Activated CD8-positive, alpha-beta T cell treated with anti-CD3 and anti-CD28 coated beads, Interleukin-2, amount 10 ng/mL, durations not matched to agents 7 days and 5 days (primary cell): ENCODE measurements at regions of chr6 and their contacts with region 1.

Region 1: DNA sequence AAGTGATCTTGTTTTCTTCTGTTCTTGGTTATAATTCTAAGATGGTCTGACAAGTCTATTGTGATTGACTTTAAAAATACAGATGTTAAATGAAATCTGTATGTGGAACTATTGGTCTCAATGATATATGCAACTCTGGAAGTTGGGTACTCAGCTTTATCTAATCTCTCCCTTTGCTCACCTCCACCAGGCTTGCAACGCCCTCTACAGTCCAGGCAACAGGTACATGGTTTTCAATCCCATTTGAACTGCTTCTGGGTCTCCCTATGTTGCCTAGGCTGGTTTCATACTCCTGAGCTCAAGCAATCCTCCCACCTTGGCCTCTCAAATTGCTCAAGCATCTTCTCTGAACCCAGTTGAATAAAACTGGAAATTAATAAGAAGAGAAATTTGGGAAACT is 25.6 kb upstream of the HLA-DQB1 start:
- DNase-seq: peak; percentile 69
- ATAC-seq: peak; percentile 81
- H3K4me3 Mint-ChIP-seq: no peak overlapping the region
- H3K27ac Mint-ChIP-seq: no peak overlapping the region
- H3K4me1 Mint-ChIP-seq: peaks cover 15% of the 10 kb centered on the region
- H3K27me3 Mint-ChIP-seq: peaks cover 47% of the 10 kb centered on the region

Region 2: DNA sequence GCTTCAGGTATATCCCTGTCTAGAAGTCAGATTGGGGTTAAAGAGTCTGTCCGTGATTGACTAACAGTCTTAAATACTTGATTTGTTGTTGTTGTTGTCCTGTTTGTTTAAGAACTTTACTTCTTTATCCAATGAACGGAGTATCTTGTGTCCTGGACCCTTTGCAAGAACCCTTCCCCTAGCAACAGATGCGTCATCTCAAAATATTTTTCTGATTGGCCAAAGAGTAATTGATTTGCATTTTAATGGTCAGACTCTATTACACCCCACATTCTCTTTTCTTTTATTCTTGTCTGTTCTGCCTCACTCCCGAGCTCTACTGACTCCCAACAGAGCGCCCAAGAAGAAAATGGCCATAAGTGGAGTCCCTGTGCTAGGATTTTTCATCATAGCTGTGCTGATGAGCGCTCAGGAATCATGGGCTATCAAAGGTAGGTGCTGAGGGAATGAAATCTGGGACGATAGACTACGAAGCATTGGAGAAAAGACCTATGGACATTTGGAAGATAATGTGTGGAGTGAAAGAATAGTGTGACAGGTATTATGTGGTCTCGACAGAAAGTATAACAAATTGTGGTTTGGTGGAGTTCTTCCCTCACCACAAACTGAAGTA is 252.3 kb before region 1 on chr6 and contains the start of gene HLA-DRA:
- CTCF ChIA-PET with region 1: interaction called, 11 read pairs
- POLR2A ChIA-PET with region 1: no interaction called
- DNase-seq: peak; percentile 63
- ATAC-seq: peak; percentile 91
- H3K4me3 Mint-ChIP-seq: peak within 1 kb of the TSS; percentile 70
- H3K27ac Mint-ChIP-seq: peak within 1 kb of the TSS; percentile 63
- H3K4me1 Mint-ChIP-seq: peaks cover 18% of the 10 kb centered on the region
- H3K27me3 Mint-ChIP-seq: peaks cover 32% of the 10 kb centered on the region
- total RNA-seq, gene HLA-DRA: 30.9 to 31.3 TPM

Region 3: DNA sequence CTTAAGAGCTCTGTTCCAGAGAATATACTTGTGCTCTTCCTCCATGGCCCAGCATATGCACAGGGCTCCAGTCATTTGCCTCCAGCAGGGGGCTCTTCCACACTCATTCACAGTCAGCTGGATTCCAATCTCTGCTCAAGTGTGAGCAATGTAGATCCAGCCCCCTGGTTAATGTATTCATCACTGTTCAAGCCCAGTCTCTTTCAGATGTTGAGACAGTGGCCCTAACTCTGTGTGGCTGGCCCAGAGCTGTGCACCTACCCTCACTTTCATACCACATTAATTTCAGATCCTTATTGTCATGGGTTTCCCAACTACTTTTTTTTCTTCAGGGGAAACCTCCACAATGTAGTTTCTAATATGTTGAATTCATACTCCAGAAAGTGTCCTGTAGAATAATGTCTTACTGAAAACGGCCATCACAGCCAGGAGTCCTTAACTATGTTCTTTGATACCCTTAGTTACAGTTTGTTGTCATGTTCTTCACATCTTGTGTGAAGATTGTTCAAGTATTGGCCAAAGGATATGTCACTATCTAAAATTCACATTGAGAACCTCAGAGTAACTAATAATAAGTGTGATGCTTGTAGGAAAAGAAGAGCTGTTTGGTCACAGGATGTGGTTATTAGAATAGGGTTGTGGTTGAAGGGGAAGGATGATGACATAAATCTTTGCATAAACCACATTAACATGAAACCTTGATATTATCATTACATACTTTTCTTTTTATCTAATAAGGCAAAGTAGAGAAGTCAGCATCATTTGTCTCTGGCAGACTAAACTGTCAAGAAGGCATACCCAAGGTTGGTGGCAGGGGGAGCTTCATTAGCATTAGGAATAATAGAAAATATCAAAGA is 69.2 kb before region 1 on chr6:
- CTCF ChIA-PET with region 1: interaction called, 24 read pairs
- POLR2A ChIA-PET with region 1: no interaction called
- DNase-seq: peak; percentile 63
- ATAC-seq: peak; percentile 80
- H3K4me3 Mint-ChIP-seq: peak overlapping the region; percentile 64
- H3K27ac Mint-ChIP-seq: peak overlapping the region; percentile 98
- H3K4me1 Mint-ChIP-seq: peaks cover 50% of the 10 kb centered on the region
- H3K27me3 Mint-ChIP-seq: no peaks in the 10 kb centered on the region

Region 4: GRCh38 chr6:32679492-32679891 is 12.5 kb before region 1 on chr6:
- CTCF ChIA-PET with region 1: no interaction called
- POLR2A ChIA-PET with region 1: no interaction called
- DNase-seq: no peak
- ATAC-seq: no peak
- H3K4me3 Mint-ChIP-seq: no peak overlapping the region
- H3K27ac Mint-ChIP-seq: no peak overlapping the region
- H3K4me1 Mint-ChIP-seq: peaks cover 10% of the 10 kb centered on the region
- H3K27me3 Mint-ChIP-seq: peaks cover 32% of the 10 kb centered on the region

Region 5: DNA sequence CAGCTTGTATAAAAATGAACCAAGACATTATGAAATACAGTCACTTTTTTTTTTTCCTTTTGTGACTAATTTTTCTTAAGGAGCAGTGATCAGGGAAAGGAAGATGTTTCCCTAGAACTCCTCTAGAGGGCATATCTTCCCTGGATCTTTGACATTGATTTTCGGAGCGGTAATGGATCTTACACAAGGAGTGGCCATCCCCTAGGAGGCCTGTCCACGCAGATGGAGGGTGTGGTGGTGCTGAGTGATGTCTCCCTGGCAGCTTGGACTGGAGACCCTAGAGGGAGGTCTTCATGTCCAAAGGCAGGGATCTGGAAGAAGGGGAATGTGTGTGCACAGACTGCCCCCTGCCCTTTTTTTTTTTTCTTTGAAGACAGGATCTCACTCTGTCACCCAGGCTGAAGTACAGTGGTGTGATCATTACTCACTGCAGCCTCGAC is 692.6 kb after region 1 on chr6:
- CTCF ChIA-PET with region 1: no interaction called
- POLR2A ChIA-PET with region 1: no interaction called
- DNase-seq: no peak
- ATAC-seq: no peak
- H3K4me3 Mint-ChIP-seq: no peak overlapping the region
- H3K27ac Mint-ChIP-seq: no peak overlapping the region
- H3K4me1 Mint-ChIP-seq: no peaks in the 10 kb centered on the region
- H3K27me3 Mint-ChIP-seq: peaks cover 8% of the 10 kb centered on the region